Naive thymus-derived CD4-positive, alpha-beta T cell (primary cell): ENCODE measurements at regions of chr12 and their contacts with region 1.

Region 1: DNA sequence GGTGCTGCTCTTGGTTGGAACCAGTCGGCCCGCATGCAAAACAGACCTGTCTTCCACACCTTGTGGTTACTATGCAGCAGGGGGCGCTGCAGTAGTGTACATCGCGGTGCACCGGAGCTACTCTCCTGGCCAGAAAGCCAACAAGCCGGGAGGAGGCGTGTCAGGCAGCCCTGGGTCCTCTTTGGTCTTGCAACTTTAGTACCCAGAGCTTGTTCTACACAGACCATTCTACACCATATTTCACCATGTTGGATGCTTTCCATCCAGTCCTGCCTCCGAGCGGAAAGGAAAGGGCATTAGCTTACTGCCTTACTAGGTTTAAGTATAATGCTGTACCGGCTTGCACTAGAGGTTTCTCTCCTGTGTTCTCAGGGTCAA is 927 bp upstream of the TMTC2 start:
- DNase-seq: peak; percentile 71 to 88 (median 82)
- ATAC-seq: peak; percentile 76
- H3K4me3 ChIP-seq: peak overlapping the region; percentile 85
- H3K4me3 Mint-ChIP-seq: peak overlapping the region; percentile 90 to 99 (median 96)
- H3K27ac ChIP-seq: peak overlapping the region; percentile 81
- H3K27ac Mint-ChIP-seq: peak overlapping the region; percentile 80 to 96 (median 94)
- H3K4me1 ChIP-seq: no peaks in the 10 kb centered on the region
- H3K4me1 Mint-ChIP-seq: peaks cover 9 to 17% (median 12%) of the 10 kb centered on the region in 7 donors
- H3K27me3 ChIP-seq: no peaks in the 10 kb centered on the region
- H3K27me3 Mint-ChIP-seq: peaks cover 0 to 20% (median 12%) of the 10 kb centered on the region in 5 donors

Region 2: DNA sequence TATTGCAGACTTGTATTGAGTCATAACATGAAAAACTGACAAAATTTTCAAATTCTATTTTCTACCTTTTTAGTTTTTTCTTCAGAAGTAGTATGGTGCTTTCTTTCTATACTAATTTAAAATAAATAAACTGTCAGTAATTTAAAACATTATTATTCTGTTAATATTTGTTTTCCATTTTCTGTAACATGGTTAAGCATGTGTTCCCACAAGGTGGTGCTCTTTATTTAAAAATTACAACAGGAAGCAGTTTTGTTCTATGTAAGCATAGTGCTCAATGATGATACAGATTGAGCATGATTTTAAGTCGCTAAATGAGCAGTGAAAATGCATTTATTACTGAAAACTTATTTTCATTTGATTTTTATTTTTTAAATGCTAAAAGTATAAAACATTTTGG is 1041.3 kb before region 1 on chr12:
- CTCF ChIA-PET with region 1: no interaction called
- POLR2A ChIA-PET with region 1: no interaction called
- intact Hi-C with region 1: loop called in 1 of 2 experiments (anchors 2 kb)
- DNase-seq: peak in 7 of 9 donors; percentile 24 to 59 (median 43)
- ATAC-seq: peak; percentile 63
- H3K4me3 ChIP-seq: no peak overlapping the region
- H3K4me3 Mint-ChIP-seq: no peak overlapping the region
- H3K27ac ChIP-seq: no peak overlapping the region
- H3K27ac Mint-ChIP-seq: no peak overlapping the region
- H3K4me1 ChIP-seq: no peaks in the 10 kb centered on the region
- H3K4me1 Mint-ChIP-seq: no peaks in the 10 kb centered on the region
- H3K27me3 ChIP-seq: no peaks in the 10 kb centered on the region
- H3K27me3 Mint-ChIP-seq: peaks cover 0 to 17% (median 9%) of the 10 kb centered on the region in 5 donors

Region 3: GRCh38 chr12:82415402-82415801 is 270.4 kb before region 1 on chr12:
- CTCF ChIA-PET with region 1: no interaction called
- POLR2A ChIA-PET with region 1: no interaction called
- intact Hi-C with region 1: no loop called
- DNase-seq: no peak
- ATAC-seq: no peak
- H3K4me3 ChIP-seq: no peak overlapping the region
- H3K4me3 Mint-ChIP-seq: no peak overlapping the region
- H3K27ac ChIP-seq: no peak overlapping the region
- H3K27ac Mint-ChIP-seq: no peak overlapping the region
- H3K4me1 ChIP-seq: no peaks in the 10 kb centered on the region
- H3K4me1 Mint-ChIP-seq: no peaks in the 10 kb centered on the region
- H3K27me3 ChIP-seq: no peaks in the 10 kb centered on the region
- H3K27me3 Mint-ChIP-seq: no peaks in the 10 kb centered on the region

Region 4: DNA sequence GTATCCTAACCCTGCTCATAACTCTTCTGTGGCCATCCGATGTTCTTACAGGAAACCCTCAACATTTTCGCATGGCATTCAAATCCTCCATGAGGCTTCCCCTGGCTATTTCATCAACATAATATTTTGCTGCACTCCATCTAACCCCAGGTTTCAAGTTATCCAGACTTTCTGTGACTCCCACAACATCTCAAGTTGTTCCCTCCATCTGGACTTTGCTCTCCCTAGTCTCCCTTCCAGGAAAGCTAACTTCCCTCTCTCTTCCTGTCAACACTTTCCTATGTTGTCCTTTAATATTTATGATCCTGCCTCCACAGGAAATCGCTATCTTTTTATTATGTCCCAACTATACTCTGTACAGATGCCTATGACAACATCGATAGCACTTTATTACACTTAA is 181.4 kb before region 1 on chr12:
- CTCF ChIA-PET with region 1: no interaction called
- POLR2A ChIA-PET with region 1: no interaction called
- intact Hi-C with region 1: no loop called
- DNase-seq: no peak
- ATAC-seq: no peak
- H3K4me3 ChIP-seq: no peak overlapping the region
- H3K4me3 Mint-ChIP-seq: no peak overlapping the region
- H3K27ac ChIP-seq: no peak overlapping the region
- H3K27ac Mint-ChIP-seq: no peak overlapping the region
- H3K4me1 ChIP-seq: no peaks in the 10 kb centered on the region
- H3K4me1 Mint-ChIP-seq: no peaks in the 10 kb centered on the region
- H3K27me3 ChIP-seq: no peaks in the 10 kb centered on the region
- H3K27me3 Mint-ChIP-seq: peaks cover 0 to 18% (median 10%) of the 10 kb centered on the region in 5 donors

Region 5: DNA sequence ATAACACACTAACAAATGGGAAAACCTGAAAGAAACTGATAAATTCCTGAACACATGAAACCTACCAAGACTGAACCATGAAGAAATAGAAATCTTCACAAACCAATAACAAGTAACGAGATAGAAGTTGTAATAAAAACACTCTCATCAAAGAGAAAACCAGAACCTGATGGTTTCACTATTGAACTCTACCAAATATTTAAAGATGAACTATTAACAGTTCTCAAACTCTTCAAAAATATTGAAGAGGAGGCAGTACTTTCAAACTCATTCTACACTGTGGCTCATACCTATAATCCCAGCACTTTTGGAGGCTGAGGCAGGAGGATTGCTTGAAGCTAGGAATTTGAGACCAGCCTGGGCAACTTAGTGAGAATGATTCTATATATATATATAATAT is 47.5 kb before region 1 on chr12:
- CTCF ChIA-PET with region 1: no interaction called
- POLR2A ChIA-PET with region 1: no interaction called
- intact Hi-C with region 1: no loop called
- DNase-seq: no peak
- ATAC-seq: no peak
- H3K4me3 ChIP-seq: no peak overlapping the region
- H3K4me3 Mint-ChIP-seq: no peak overlapping the region
- H3K27ac ChIP-seq: no peak overlapping the region
- H3K27ac Mint-ChIP-seq: no peak overlapping the region
- H3K4me1 ChIP-seq: no peaks in the 10 kb centered on the region
- H3K4me1 Mint-ChIP-seq: no peaks in the 10 kb centered on the region
- H3K27me3 ChIP-seq: no peaks in the 10 kb centered on the region
- H3K27me3 Mint-ChIP-seq: peaks cover 0 to 5% (median 0%) of the 10 kb centered on the region in 5 donors

Region 6: GRCh38 chr12:82996160-82996812 is 310.5 kb after region 1 on chr12:
- CTCF ChIA-PET with region 1: no interaction called
- POLR2A ChIA-PET with region 1: no interaction called
- intact Hi-C with region 1: loop called in 1 of 2 experiments (anchors 5 kb)
- DNase-seq: no peak
- ATAC-seq: no peak
- H3K4me3 ChIP-seq: no peak overlapping the region
- H3K4me3 Mint-ChIP-seq: no peak overlapping the region
- H3K27ac ChIP-seq: no peak overlapping the region
- H3K27ac Mint-ChIP-seq: peak overlapping the region in 1 of 9 donors; percentile 41
- H3K4me1 ChIP-seq: no peaks in the 10 kb centered on the region
- H3K4me1 Mint-ChIP-seq: no peaks in the 10 kb centered on the region
- H3K27me3 ChIP-seq: no peaks in the 10 kb centered on the region
- H3K27me3 Mint-ChIP-seq: no peaks in the 10 kb centered on the region

Region 7: DNA sequence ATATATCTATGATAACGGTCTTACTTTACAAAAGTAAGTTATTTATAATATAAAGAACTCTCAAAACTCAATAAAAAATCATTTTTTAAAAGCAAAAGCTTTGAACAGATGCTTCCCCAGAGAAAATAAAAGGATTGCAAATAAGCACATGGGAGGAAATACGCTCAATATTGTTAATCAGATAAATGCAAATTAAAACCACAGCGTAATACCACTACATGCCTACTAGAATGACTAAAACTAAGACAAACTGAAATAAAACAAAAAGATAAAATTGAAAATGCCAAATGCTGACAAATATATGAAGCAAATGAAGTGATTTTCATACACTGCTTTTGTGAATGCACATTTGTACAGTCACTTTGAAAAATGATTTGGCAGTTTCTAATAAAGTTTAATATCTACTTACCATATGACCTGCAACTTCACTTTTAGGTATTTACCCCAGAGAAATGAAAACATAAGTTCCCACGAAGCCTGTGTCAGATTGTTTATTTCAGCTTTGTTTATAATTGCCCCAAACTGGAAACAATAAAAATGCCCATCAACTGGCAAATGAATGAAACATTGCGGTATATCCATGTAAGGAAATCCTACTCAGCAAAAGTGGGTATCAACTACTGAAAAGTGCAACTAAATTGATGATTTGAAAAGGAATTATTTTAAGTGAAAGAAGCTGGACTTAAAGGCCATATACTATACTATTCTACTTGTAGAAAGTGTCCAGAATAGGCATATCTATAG is 1073.3 kb after region 1 on chr12:
- CTCF ChIA-PET with region 1: no interaction called
- POLR2A ChIA-PET with region 1: no interaction called
- intact Hi-C with region 1: loop called in 1 of 2 experiments (anchors 5 kb)
- DNase-seq: no peak
- ATAC-seq: no peak
- H3K4me3 ChIP-seq: no peak overlapping the region
- H3K4me3 Mint-ChIP-seq: no peak overlapping the region
- H3K27ac ChIP-seq: no peak overlapping the region
- H3K27ac Mint-ChIP-seq: no peak overlapping the region
- H3K4me1 ChIP-seq: no peaks in the 10 kb centered on the region
- H3K4me1 Mint-ChIP-seq: no peaks in the 10 kb centered on the region
- H3K27me3 ChIP-seq: no peaks in the 10 kb centered on the region
- H3K27me3 Mint-ChIP-seq: no peaks in the 10 kb centered on the region

Region 8: DNA sequence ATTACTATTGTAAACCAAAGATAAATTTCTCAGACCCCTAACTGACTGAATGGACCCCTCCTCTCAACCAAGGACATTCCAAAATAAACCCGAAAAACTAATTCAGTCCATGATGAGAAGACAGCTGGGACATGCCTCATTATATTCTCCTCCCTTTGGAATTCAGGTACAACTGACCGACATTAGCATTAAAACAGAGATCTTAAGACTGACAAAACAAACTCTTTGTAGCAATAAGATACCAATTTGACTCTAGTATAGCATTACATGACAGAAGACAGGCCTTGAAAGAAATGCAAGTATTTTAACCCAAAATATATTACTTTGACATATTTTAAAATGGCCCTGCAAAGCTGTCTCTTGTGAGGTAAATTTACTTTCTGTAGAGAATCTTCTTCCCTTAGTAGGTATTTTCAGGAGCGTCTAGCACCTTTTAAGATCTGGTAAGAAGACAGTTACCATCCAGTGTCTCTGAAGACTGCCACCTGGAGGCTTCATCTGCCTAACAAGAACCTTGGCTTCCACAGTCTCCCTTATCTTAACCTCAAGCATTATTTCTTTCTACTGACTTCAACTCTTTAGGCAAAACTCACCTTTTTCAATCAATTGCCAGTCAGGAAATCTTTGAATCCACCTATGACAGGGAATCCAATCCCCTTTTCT is 1269.3 kb after region 1 on chr12:
- CTCF ChIA-PET with region 1: no interaction called
- POLR2A ChIA-PET with region 1: no interaction called
- intact Hi-C with region 1: loop called in 1 of 2 experiments (anchors 10 kb)
- DNase-seq: no peak
- ATAC-seq: no peak
- H3K4me3 ChIP-seq: no peak overlapping the region
- H3K4me3 Mint-ChIP-seq: no peak overlapping the region
- H3K27ac ChIP-seq: no peak overlapping the region
- H3K27ac Mint-ChIP-seq: no peak overlapping the region
- H3K4me1 ChIP-seq: no peaks in the 10 kb centered on the region
- H3K4me1 Mint-ChIP-seq: no peaks in the 10 kb centered on the region
- H3K27me3 ChIP-seq: no peaks in the 10 kb centered on the region
- H3K27me3 Mint-ChIP-seq: no peaks in the 10 kb centered on the region